Mammary epithelial cell (primary cell): ENCODE measurements at regions of chr9 and their contacts with region 1.

Region 1: GRCh38 chr9:136644598-136645351 is 17.9 kb upstream of the EGFL7 start:
- DNase-seq: no peak
- H3K4me3 ChIP-seq: no peak overlapping the region
- H3K27ac ChIP-seq: no peak overlapping the region
- H3K4me1 ChIP-seq: peaks cover 10% of the 10 kb centered on the region
- H3K27me3 ChIP-seq: peaks cover 4% of the 10 kb centered on the region
- CTCF ChIP-seq: peak; percentile 80 to 87

Region 2: DNA sequence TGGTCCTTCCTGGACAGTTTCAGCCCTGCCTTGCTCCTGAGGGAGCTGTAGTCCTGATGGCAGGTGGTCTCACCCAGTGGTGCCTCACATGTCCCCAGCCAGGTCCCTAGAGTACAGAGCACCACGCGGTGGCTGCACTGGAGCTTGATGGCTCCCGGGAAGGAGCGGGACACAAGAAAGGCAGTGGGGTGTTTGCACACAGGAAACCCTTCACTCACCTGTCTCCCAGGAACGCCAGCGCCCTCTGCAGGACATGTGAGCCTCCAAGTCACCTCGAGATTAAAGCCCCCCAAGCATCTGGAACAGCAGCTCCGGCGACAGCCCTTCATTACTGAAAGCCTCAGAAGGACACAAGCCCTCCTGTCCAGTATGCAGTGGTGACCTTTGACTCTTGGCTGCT is 506.2 kb before region 1 on chr9:
- CTCF ChIA-PET with region 1: no interaction called
- dilution Hi-C with region 1: no loop called
- in situ Hi-C with region 1: no loop called
- intact Hi-C with region 1: loop called (anchors 10 kb)
- DNase-seq: no peak
- H3K4me3 ChIP-seq: no peak overlapping the region
- H3K27ac ChIP-seq: no peak overlapping the region
- H3K4me1 ChIP-seq: peaks cover 14% of the 10 kb centered on the region
- H3K27me3 ChIP-seq: peaks cover 6% of the 10 kb centered on the region
- CTCF ChIP-seq: peak; percentile 26 to 48

Region 3: GRCh38 chr9:136447173-136447778 is 197.5 kb before region 1 on chr9:
- CTCF ChIA-PET with region 1: no interaction called
- dilution Hi-C with region 1: loop called (anchors 5 kb)
- in situ Hi-C with region 1: no loop called
- intact Hi-C with region 1: no loop called
- DNase-seq: no peak
- H3K4me3 ChIP-seq: no peak overlapping the region
- H3K27ac ChIP-seq: no peak overlapping the region
- H3K4me1 ChIP-seq: no peaks in the 10 kb centered on the region
- H3K27me3 ChIP-seq: no peaks in the 10 kb centered on the region
- CTCF ChIP-seq: no peak

Region 4: DNA sequence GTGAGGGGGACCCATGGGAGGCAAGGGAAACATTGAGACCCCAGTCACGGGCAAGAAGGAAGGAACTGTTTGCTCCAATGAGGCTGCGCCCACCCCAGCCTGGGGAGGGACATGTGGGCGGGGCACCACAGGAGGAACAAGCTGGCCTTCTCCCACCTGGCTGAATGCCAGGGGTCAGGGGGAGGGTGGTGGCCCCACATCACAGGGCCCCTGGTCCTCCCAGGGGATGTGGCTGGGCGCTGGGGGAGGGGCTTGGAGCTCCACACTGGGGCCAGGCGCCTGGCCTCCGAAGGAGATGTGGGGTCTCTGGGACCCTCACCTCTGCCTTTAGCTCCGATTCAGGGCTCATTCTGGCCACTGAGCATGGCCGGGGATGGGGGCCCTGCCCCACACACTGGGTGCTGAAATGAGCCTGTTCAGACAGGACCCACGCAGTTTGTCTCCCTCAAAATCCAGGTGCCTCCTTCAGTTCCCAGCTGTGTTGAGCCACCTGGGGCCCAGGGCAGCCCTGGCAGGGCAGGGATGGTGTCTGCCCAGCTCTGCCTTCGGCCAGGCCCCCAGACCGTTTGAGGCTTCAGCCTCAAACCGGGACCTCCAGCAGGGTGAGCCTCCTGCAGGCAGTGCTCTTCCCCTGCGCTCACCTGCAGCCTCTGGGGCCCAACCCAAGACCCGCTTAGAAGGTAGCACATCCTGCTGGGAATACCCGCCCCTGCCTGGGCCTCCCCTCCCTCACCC is 65.7 kb before region 1 on chr9:
- CTCF ChIA-PET with region 1: no interaction called
- dilution Hi-C with region 1: loop called (anchors 5 kb)
- in situ Hi-C with region 1: no loop called
- intact Hi-C with region 1: no loop called
- DNase-seq: peak; percentile 36
- H3K4me3 ChIP-seq: no peak overlapping the region
- H3K27ac ChIP-seq: no peak overlapping the region
- H3K4me1 ChIP-seq: peaks cover 12% of the 10 kb centered on the region
- H3K27me3 ChIP-seq: no peaks in the 10 kb centered on the region
- CTCF ChIP-seq: peak in 1 of 2 donors; percentile 8

Region 5: GRCh38 chr9:136711751-136712689 is 67.2 kb after region 1 on chr9 and contains the start of gene DIPK1B:
- CTCF ChIA-PET with region 1: no interaction called
- dilution Hi-C with region 1: loop called (anchors 5 kb)
- in situ Hi-C with region 1: no loop called
- intact Hi-C with region 1: no loop called
- DNase-seq: no peak
- H3K4me3 ChIP-seq: no peak within 1 kb of the TSS
- H3K27ac ChIP-seq: no peak within 1 kb of the TSS
- H3K4me1 ChIP-seq: no peaks in the 10 kb centered on the region
- H3K27me3 ChIP-seq: peaks cover 6% of the 10 kb centered on the region
- CTCF ChIP-seq: no peak
- total RNA-seq, gene DIPK1B: 0.35 to 0.50 TPM